Right ventricle myocardium inferior (tissue), 1 donor: ENCODE measurements at regions of chr3 and their contacts with region 1.

Region 1: DNA sequence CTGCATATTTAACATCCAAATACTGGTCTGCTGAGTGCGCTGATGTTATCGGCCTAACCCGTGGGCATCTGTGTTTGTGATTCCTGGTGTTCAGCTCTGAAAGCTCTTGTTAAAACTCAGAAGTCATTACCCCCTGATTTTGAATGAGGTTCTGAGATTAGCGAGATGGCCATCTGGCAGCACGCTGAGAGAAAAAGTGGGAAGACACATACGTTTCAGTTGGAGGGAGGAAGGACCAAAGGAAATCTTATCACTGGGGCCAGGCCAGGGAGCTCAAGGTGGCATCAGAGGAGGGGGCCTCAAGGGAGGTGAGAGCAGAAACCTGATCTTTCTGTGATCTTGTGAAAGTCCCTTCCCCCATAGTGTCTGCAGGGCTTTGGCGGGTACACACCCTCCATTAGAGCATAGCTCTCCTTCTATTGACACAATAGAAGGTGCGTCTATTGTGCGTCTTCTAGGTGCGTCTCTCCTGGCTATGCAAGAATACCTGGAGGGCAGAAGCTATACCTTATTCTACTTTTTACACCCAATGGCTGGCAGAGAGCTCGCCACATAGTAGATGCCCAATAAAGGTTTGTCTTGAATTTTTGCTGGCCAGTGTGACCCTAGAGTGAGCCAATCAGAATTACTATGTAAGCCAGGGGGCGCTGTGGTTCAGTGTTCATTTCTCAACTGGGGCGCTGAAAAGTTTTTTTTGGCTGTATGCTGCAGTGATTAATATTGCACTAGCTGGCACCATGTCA is 182.4 kb downstream of the SHQ1 start:
- DNase-seq: no peak
- ATAC-seq: no peak

Region 2: GRCh38 chr3:72482589-72483321 is 183.1 kb before region 1 on chr3:
- intact Hi-C with region 1: loop called (anchors 10 kb)
- DNase-seq: no peak
- ATAC-seq: peak; percentile 25